ENCODE measurements at regions of chr14 and their contacts with region 1.

Region 1: DNA sequence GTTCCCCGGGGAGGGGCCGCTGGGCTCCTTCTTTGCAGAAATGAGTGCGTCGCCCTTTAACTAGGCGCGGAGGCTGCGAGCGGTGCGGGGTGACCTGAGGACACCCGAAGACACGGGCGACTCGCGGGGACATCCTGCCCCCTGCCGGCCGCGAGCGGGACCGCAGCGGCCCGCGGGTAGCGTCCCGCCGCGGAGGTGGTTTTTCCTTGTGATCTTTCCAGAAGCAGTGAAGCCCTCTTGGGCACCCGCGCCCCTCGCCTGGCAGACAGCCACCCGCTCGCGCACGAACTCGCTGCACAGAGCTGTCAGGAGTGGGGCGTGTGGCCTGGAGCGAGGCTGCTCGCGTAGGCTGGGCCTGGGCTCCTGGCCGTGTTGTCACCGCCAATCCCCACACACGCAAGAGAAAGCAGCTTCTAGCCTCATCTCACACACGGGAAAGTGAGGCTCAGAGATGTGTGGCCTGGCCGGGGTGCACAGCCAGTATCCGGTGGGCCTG is 67.2 kb downstream of the DIO3 start:
- DNase-seq: no peak
- H3K4me3 ChIP-seq: peak overlapping the region; percentile 31 to 42 (median 38)
- H3K27ac ChIP-seq: no peak overlapping the region
- H3K4me1 ChIP-seq: peaks cover 12 to 15% (median 14%) of the 10 kb centered on the region in 4 donors
- H3K27me3 ChIP-seq: no peaks in the 10 kb centered on the region
- CTCF ChIP-seq: peak; percentile 99 to 100 (median 100)
- EP300 ChIP-seq: no peak
- POLR2A ChIP-seq: no peak

Region 2: DNA sequence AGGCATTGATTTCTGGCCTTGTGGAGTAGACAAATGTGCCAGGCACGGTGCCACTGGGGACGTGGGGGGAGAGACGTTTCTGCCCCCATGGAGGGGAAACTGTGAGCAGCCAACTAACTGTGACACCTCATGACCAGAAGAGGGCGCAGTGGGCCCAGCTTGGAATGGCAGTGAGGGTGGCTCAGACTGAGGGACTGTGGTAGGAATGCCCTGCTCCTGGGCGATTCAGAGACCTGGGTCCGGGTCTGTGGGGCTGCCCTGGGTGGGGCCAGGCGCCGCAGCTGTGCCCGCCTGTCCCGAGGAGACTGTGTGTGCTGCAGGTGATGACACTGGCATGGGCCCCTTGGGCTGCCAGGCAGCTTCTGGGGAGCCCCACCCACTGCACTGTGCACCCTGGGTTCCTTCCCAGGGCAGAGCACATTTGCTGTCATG is 1244.8 kb before region 1 on chr14:
- intact Hi-C with region 1: loop called (anchors 2 kb)
- DNase-seq: no peak
- H3K4me3 ChIP-seq: no peak overlapping the region
- H3K27ac ChIP-seq: no peak overlapping the region
- H3K4me1 ChIP-seq: peaks cover 3 to 18% (median 8%) of the 10 kb centered on the region in 4 donors
- H3K27me3 ChIP-seq: no peaks in the 10 kb centered on the region
- CTCF ChIP-seq: peak; percentile 62 to 77 (median 63)
- EP300 ChIP-seq: no peak
- POLR2A ChIP-seq: no peak

Region 3: GRCh38 chr14:100662879-100663760 is 965.4 kb before region 1 on chr14:
- intact Hi-C with region 1: loop called (anchors 5 kb)
- DNase-seq: no peak
- H3K4me3 ChIP-seq: no peak overlapping the region
- H3K27ac ChIP-seq: no peak overlapping the region
- H3K4me1 ChIP-seq: peaks cover 0 to 34% (median 16%) of the 10 kb centered on the region in 4 donors
- H3K27me3 ChIP-seq: peaks cover 0 to 45% (median 2%) of the 10 kb centered on the region in 4 donors
- CTCF ChIP-seq: peak; percentile 76 to 93 (median 77)
- EP300 ChIP-seq: no peak
- POLR2A ChIP-seq: no peak

Region 4: GRCh38 chr14:100850841-100851585 is 777.5 kb before region 1 on chr14:
- intact Hi-C with region 1: loop called (anchors 5 kb)
- DNase-seq: no peak
- H3K4me3 ChIP-seq: no peak overlapping the region
- H3K27ac ChIP-seq: no peak overlapping the region
- H3K4me1 ChIP-seq: no peaks in the 10 kb centered on the region
- H3K27me3 ChIP-seq: no peaks in the 10 kb centered on the region
- CTCF ChIP-seq: peak; percentile 44 to 70 (median 46)
- EP300 ChIP-seq: no peak
- POLR2A ChIP-seq: no peak

Region 5: GRCh38 chr14:101520621-101521472 is 107.7 kb before region 1 on chr14:
- intact Hi-C with region 1: no loop called
- DNase-seq: no peak
- H3K4me3 ChIP-seq: no peak overlapping the region
- H3K27ac ChIP-seq: no peak overlapping the region
- H3K4me1 ChIP-seq: peaks cover 0 to 25% (median 11%) of the 10 kb centered on the region in 4 donors
- H3K27me3 ChIP-seq: no peaks in the 10 kb centered on the region
- CTCF ChIP-seq: no peak
- EP300 ChIP-seq: no peak
- POLR2A ChIP-seq: no peak